Heart right ventricle (tissue), 16 donors: ENCODE measurements at regions of chr3 and their contacts with region 1.

Region 1: DNA sequence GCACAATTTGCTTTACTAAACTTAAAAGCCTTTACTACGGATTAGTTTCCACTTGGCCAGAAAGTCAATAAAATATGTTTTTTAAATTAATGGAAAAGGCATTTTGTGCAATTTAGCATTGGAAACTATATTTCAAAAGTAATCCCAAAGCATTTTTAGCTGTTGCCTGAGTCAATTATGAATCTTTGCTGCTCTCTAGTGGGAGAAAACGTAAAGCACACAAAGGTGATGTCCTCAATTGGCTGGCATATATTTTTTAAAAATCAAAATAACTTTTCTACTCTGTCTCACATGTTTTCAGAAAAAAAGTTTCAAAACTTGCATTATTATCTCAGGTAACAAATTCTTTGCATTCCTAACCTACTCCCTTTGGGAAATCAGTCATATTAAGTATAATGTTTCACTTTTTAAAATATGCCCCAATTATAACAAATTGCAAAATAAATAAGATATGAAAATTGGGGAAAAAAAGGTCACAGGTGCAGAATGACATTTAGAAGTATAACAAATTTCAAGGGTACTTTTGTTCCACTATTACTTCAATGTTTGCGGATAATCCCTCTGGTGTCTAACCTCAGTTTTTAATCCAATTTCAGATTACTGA is 47.2 kb upstream of the TEX55 start:
- DNase-seq: peak in 1 of 2 donors; percentile 19
- ATAC-seq: no peak
- H3K4me3 ChIP-seq: no peak overlapping the region
- H3K27ac ChIP-seq: no peak overlapping the region
- H3K4me1 ChIP-seq: no peaks in the 10 kb centered on the region
- H3K27me3 ChIP-seq: no peaks in the 10 kb centered on the region
- CTCF ChIP-seq: peak; percentile 19 to 79 (median 63)

Region 2: DNA sequence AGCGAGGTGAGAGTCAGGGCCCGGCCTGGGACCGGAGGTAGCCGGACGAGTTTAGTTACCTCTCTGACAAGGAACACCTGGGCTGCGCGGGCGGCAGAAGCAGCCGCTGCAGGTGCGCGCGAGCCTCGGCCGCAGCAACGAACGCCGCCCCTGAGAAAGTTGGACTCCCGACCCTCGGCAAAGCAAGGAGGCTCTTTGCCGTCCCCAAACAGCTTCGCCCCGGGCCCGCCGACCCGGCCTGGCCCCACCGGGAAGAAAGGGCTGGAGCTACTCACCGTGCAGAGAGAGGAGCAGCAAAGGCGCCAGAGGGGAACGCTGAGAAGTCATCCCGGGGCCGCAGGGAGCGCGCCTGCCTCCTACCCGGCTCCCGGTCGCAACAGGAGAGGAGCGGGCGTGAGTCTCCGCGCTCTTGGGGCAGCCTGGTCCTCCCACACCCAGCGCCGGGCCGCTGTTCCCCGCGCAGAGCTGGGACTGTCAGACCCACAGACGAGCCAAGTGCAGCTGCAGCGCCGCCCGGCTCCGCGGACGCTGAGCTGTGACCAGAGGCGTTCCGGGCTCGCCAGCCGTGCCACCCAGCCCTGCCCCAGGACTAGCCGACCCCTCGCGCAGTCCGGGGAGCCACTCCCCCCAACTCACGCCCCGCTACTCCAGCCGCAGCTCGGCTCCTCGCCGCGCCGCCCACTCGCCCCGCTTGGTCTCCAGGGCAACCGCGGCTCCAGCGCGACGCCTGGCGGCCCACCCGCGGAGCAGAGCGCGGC is 64.3 kb before region 1 on chr3 and contains the start of gene IGSF11:
- intact Hi-C with region 1: loop called in 3 of 10 experiments (anchors 5 to 10 kb)
- DNase-seq: peak; percentile 44 to 66
- ATAC-seq: peak; percentile 89 to 98 (median 93)
- H3K4me3 ChIP-seq: peak within 1 kb of the TSS; percentile 36 to 73 (median 64)
- H3K27ac ChIP-seq: peak within 1 kb of the TSS in 1 of 10 donors; percentile 22
- H3K4me1 ChIP-seq: peaks cover 0 to 13% (median 3%) of the 10 kb centered on the region in 9 donors
- H3K27me3 ChIP-seq: peaks cover 0 to 67% (median 47%) of the 10 kb centered on the region in 7 donors
- CTCF ChIP-seq: peak; percentile 33 to 79 (median 54)
- total RNA-seq, gene IGSF11: 0.45 to 6.1 (median 1.6) TPM